MCF 10A (cell line): ENCODE measurements at regions of chr1 and their contacts with region 1.

Region 1: DNA sequence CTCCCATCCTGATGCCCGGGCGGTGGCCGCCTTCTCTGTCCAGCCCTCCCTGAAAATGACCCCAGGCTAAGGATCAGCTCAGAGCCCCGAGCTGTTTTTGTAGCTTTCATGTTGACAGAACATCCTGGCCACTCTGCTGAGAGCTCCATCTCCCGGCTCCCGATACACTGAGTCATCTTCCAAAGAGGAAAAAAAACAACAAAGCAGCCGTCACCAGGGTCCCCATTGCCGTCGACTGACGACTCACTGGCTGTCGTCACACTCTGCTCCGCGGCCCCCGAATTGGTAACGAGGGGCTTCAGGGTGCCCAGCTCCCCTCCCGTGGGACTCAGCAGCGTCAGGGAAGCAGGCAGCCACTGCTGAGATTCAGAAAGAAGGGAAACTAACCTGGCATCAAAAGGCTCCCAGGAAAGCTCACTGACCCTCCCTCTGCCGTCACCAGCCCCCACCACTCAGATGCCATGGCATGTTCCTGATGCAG is 67.2 kb downstream of the CD46 start:
- DNase-seq: peak; percentile 78
- H3K4me3 Mint-ChIP-seq: peak overlapping the region; percentile 53
- H3K27ac Mint-ChIP-seq: peak overlapping the region; percentile 81
- H3K4me1 Mint-ChIP-seq: peaks cover 81% of the 10 kb centered on the region
- H3K27me3 Mint-ChIP-seq: no peaks in the 10 kb centered on the region
- CTCF ChIP-seq: no peak

Region 2: GRCh38 chr1:207336559-207337467 is 482.2 kb before region 1 on chr1:
- CTCF ChIA-PET with region 1: no interaction called
- POLR2A ChIA-PET with region 1: no interaction called
- intact Hi-C with region 1: no loop called
- DNase-seq: peak; percentile 39
- H3K4me3 Mint-ChIP-seq: no peak overlapping the region
- H3K27ac Mint-ChIP-seq: peak overlapping the region; percentile 21
- H3K4me1 Mint-ChIP-seq: peaks cover 22% of the 10 kb centered on the region
- H3K27me3 Mint-ChIP-seq: no peaks in the 10 kb centered on the region
- CTCF ChIP-seq: no peak

Region 3: GRCh38 chr1:207805841-207806421 is 13.1 kb before region 1 on chr1:
- CTCF ChIA-PET with region 1: interaction called, 68 read pairs
- POLR2A ChIA-PET with region 1: interaction called, 102 read pairs
- intact Hi-C with region 1: loop called (anchors 2 kb)
- DNase-seq: peak; percentile 100
- H3K4me3 Mint-ChIP-seq: peak overlapping the region; percentile 21
- H3K27ac Mint-ChIP-seq: peak overlapping the region; percentile 95
- H3K4me1 Mint-ChIP-seq: peaks cover 58% of the 10 kb centered on the region
- H3K27me3 Mint-ChIP-seq: no peaks in the 10 kb centered on the region
- CTCF ChIP-seq: no peak